Astrocyte of the cerebellum (primary cell): ENCODE measurements at regions of chr1 and their contacts with region 1.

Region 1: GRCh38 chr1:147878022-147878421 is 24.6 kb upstream of the GJA8 start:
- DNase-seq: no peak
- H3K4me3 ChIP-seq: no peak overlapping the region
- CTCF ChIP-seq: no peak

Region 2: GRCh38 chr1:147567594-147568381 is 310.2 kb before region 1 on chr1:
- in situ Hi-C with region 1: no loop called
- DNase-seq: no peak
- H3K4me3 ChIP-seq: no peak overlapping the region
- CTCF ChIP-seq: no peak

Region 3: DNA sequence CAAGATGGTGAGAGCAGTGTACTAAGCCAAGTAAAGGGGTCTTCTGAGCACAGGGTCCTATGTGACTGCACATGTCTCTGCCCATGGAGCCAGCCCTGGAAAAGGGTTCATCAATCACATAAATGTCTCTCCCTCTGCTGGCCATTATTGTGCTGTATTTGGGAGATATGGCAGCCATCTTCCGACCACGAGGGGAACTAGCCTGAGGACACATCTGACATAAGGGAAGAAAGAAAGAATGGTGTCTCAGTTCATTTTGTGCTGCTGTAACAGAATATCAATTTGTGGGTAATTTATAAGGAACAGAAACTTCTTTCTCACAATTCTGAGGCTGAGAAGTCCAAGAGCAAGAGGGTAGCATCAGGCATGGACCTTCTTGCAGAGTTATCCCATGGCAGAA is 62.5 kb before region 1 on chr1:
- in situ Hi-C with region 1: loop called (anchors 10 kb)
- DNase-seq: no peak
- H3K4me3 ChIP-seq: no peak overlapping the region
- CTCF ChIP-seq: no peak